Activated CD8-positive, alpha-beta T cell treated with anti-CD3 and anti-CD28 coated beads, Interleukin-2, amount 10 ng/mL, durations not matched to agents 7 days and 5 days (primary cell): ENCODE measurements at regions of chr22 and their contacts with region 1.

Region 1: GRCh38 chr22:38051900-38052862 is 5.0 kb upstream of the PICK1 start:
- DNase-seq: peak; percentile 87
- ATAC-seq: peak; percentile 80
- H3K4me3 Mint-ChIP-seq: no peak overlapping the region
- H3K27ac Mint-ChIP-seq: no peak overlapping the region
- H3K4me1 Mint-ChIP-seq: peaks cover 18% of the 10 kb centered on the region
- H3K27me3 Mint-ChIP-seq: peaks cover 7% of the 10 kb centered on the region

Region 2: DNA sequence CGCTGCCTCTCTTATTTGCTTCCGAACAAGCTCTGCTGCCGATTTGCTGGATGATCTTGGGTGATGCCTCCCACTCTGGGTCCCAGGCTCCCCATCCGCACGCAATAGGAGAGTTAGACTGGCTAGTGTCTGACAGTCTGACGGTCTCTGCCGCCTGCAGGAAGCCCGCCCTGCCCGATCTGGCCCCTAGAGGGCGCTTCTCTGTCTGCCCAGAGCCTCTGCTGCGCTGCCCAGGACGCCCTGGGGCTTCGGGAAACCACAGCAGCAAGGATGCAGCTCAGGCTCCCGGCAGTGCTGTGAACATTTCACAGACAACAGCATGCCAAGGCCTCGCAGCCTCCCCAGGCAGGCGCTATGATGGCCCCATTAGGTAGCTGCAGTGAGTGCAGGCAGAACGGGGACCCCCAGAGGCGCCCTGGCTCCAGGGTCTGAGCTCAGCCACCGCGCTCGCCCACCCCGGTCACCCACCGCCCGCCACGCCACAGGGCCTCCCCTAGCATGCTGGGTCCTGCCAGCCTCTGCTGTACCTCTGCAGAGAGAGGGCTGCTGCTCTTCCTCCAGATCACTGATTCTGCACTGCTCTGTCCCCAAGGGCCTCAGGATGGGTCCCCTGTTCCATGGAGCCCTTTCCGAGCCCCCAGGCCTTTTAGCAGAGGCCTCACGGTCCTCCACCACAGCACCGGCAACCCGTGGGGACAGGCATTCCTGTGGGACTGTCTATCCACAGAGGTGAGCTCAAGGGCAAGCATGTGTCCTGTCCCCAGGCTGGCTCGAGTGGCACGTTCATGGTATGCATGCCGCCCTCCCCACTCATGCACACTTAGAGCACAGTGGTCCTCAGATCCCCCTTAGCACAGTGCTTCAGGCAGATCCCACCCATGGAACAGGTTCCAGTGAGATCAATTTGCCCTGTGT is 62.6 kb after region 1 on chr22:
- CTCF ChIA-PET with region 1: interaction called, 13 read pairs
- POLR2A ChIA-PET with region 1: no interaction called
- DNase-seq: peak; percentile 86
- ATAC-seq: peak; percentile 86
- H3K4me3 Mint-ChIP-seq: no peak overlapping the region
- H3K27ac Mint-ChIP-seq: no peak overlapping the region
- H3K4me1 Mint-ChIP-seq: peaks cover 7% of the 10 kb centered on the region
- H3K27me3 Mint-ChIP-seq: no peaks in the 10 kb centered on the region

Region 3: GRCh38 chr22:38230108-38230825 is 178.1 kb after region 1 on chr22:
- CTCF ChIA-PET with region 1: interaction called, 32 read pairs
- POLR2A ChIA-PET with region 1: no interaction called
- DNase-seq: peak; percentile 56
- ATAC-seq: peak; percentile 43
- H3K4me3 Mint-ChIP-seq: no peak overlapping the region
- H3K27ac Mint-ChIP-seq: no peak overlapping the region
- H3K4me1 Mint-ChIP-seq: peaks cover 13% of the 10 kb centered on the region
- H3K27me3 Mint-ChIP-seq: no peaks in the 10 kb centered on the region

Region 4: GRCh38 chr22:38353142-38353629 is 301.0 kb after region 1 on chr22:
- CTCF ChIA-PET with region 1: interaction called, 24 read pairs
- POLR2A ChIA-PET with region 1: no interaction called
- DNase-seq: peak; percentile 69
- ATAC-seq: peak; percentile 89
- H3K4me3 Mint-ChIP-seq: no peak overlapping the region
- H3K27ac Mint-ChIP-seq: no peak overlapping the region
- H3K4me1 Mint-ChIP-seq: no peaks in the 10 kb centered on the region
- H3K27me3 Mint-ChIP-seq: no peaks in the 10 kb centered on the region